GM18951 (cell line): ENCODE measurements at regions of chr11 and their contacts with region 1.

Region 1: GRCh38 chr11:78851878-78852586 is 277.4 kb upstream of the NARS2 start:
- POLR2A ChIP-seq: no peak

Region 2: GRCh38 chr11:78325274-78325781 is 526.7 kb before region 1 on chr11:
- in situ Hi-C with region 1: loop called (anchors 10 kb)
- POLR2A ChIP-seq: no peak

Region 3: GRCh38 chr11:78420255-78420764 is 431.7 kb before region 1 on chr11:
- in situ Hi-C with region 1: no loop called
- POLR2A ChIP-seq: no peak